ENCODE measurements at regions of chr2 and their contacts with region 1.

Region 1: DNA sequence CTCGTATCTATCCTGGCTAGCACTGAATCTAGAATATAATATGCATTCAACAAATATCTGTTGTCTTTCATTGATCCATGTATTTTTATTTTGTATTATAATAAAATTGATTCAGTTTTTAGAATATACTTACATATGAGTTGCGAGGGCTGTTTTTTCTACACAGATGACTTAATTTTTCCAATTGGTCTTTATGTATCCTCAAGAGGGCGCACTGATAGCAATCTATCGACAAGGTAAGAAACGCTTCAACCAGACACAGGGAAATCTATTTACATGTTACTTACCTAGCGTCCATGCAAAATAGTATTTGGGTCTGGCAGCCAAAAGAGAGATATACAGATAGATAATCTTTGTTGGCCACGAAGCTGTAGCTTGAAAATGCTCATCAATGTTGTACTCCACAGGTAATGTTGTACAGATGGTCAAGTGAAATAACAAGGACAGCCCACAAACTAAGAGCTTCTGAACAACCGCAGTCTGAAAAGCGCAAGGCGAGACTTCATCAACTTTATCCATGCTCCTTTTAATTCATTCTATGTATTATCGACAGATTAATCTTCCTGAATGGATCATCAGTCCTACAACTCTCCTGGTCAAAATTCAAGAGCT is 35.5 kb upstream of the KIDINS220 start:
- DNase-seq: peak; percentile 61
- ATAC-seq: peak; percentile 56
- H3K4me3 ChIP-seq: no peak overlapping the region
- H3K27ac ChIP-seq: no peak overlapping the region
- H3K4me1 ChIP-seq: no peaks in the 10 kb centered on the region
- H3K27me3 ChIP-seq: peaks cover 1 to 4% of the 10 kb centered on the region in 2 experiments; a peak in 1 of 5 replicates
- CTCF ChIP-seq: peak; percentile 69
- EP300 ChIP-seq: no peak
- POLR2A ChIP-seq: no peak
- RAD21 ChIP-seq: no peak

Region 2: DNA sequence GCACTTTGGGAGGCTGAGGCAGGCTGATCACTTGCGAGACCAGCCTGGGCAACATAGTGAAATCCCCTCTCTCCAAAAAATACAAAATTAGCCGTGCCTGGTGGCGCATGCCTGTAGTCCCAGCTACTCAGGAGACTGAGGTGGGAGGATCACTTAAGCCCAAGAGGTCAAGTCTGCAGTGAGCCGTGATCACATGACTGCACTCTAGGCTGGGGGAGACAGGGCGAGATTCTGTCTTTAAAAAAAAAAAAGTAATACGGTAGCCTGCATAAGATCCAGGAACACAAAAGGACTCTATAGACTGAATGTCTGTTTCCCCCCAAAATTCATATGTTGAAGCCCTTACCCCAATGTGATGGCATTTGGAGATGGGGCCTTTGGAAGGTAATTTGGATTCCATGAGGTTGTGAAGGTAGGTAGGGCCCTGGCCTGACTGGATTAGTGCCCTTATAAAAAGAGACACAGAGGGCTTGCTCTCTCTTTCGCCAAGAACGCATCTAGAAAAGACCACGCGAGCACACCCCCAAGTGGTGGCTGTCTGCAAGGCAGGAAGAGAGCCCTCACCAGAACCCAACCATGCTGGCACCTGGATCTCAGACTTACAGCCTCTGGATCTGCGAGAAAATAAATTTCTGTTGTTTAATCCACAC is 113.5 kb after region 1 on chr2:
- CTCF ChIA-PET with region 1: no interaction called
- POLR2A ChIA-PET with region 1: no interaction called
- in situ Hi-C with region 1: loop called (anchors 10 kb)
- intact Hi-C with region 1: loop called (anchors 1 kb)
- DNase-seq: peak; percentile 36
- ATAC-seq: peak; percentile 99
- H3K4me3 ChIP-seq: no peak overlapping the region
- H3K27ac ChIP-seq: no peak overlapping the region
- H3K4me1 ChIP-seq: no peaks in the 10 kb centered on the region
- H3K27me3 ChIP-seq: no peaks in the 10 kb centered on the region
- CTCF ChIP-seq: peak; percentile 79
- EP300 ChIP-seq: no peak
- POLR2A ChIP-seq: no peak
- RAD21 ChIP-seq: peak; percentile 63

Region 3: DNA sequence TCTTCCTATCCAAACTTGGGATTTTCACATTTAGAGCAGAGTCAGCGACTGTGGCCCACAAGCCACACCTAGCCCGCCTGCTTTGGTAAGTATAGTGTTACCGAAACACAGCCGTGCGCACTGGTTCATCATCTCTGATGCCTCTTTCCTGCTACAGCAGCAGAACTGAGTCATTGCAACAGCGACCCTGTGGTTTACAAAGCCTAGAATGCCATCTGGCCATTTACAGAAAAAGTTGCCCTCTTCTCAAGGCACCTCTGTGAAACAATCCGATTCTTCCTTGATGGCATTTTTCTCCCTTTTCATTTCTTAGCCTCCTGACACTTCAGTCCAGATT is 590.7 kb after region 1 on chr2:
- CTCF ChIA-PET with region 1: no interaction called
- POLR2A ChIA-PET with region 1: no interaction called
- in situ Hi-C with region 1: no loop called
- intact Hi-C with region 1: no loop called
- DNase-seq: no peak
- ATAC-seq: no peak
- H3K4me3 ChIP-seq: no peak overlapping the region
- H3K27ac ChIP-seq: no peak overlapping the region
- H3K4me1 ChIP-seq: peaks cover 8% of the 10 kb centered on the region; the same call in 1 of the 2 replicates
- H3K27me3 ChIP-seq: no peaks in the 10 kb centered on the region
- CTCF ChIP-seq: no peak
- EP300 ChIP-seq: no peak
- POLR2A ChIP-seq: no peak
- RAD21 ChIP-seq: no peak